Activated CD8-positive, alpha-beta T cell treated with anti-CD3 and anti-CD28 coated beads, Interleukin-2, amount 10 ng/mL, durations not matched to agents 7 days and 5 days (primary cell): ENCODE measurements at regions of chr7 and their contacts with region 1.

Region 1: GRCh38 chr7:122092964-122093797 is 50.9 kb downstream of the AASS start:
- DNase-seq: peak; percentile 69
- ATAC-seq: peak; percentile 53
- H3K4me3 Mint-ChIP-seq: no peak overlapping the region
- H3K27ac Mint-ChIP-seq: no peak overlapping the region
- H3K4me1 Mint-ChIP-seq: no peaks in the 10 kb centered on the region
- H3K27me3 Mint-ChIP-seq: no peaks in the 10 kb centered on the region

Region 2: GRCh38 chr7:121797657-121798452 is 295.3 kb before region 1 on chr7:
- CTCF ChIA-PET with region 1: no interaction called
- POLR2A ChIA-PET with region 1: no interaction called
- DNase-seq: no peak
- ATAC-seq: no peak
- H3K4me3 Mint-ChIP-seq: no peak overlapping the region
- H3K27ac Mint-ChIP-seq: no peak overlapping the region
- H3K4me1 Mint-ChIP-seq: no peaks in the 10 kb centered on the region
- H3K27me3 Mint-ChIP-seq: no peaks in the 10 kb centered on the region

Region 3: DNA sequence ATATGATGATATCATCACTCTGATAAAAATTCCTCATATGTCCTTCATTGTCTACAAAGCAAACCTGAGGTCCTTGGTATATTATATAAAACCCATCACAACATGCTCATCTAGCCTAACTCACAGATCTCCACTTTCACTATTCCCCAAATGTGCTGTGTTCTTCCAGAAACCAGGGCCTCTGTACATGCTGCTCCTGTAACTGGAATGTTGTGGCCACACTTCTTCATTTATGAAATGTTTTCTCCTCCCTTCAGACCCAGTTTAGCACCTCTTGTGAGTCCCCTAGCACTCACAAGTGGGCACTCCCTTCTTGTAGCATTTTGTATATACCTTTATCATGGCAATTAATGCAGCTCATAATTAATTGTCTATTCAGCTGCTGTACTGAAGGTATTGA is 11.0 kb before region 1 on chr7:
- CTCF ChIA-PET with region 1: interaction called, 11 read pairs
- POLR2A ChIA-PET with region 1: no interaction called
- DNase-seq: no peak
- ATAC-seq: no peak
- H3K4me3 Mint-ChIP-seq: no peak overlapping the region
- H3K27ac Mint-ChIP-seq: no peak overlapping the region
- H3K4me1 Mint-ChIP-seq: no peaks in the 10 kb centered on the region
- H3K27me3 Mint-ChIP-seq: no peaks in the 10 kb centered on the region